B cell (primary cell): ENCODE measurements at regions of chr1 and their contacts with region 1.

Region 1: GRCh38 chr1:28208818-28209441 is 23.9 kb downstream of the DNAJC8 start:
- DNase-seq: peak; percentile 80
- ATAC-seq: peak; percentile 86
- H3K4me3 ChIP-seq: no peak overlapping the region
- H3K4me3 Mint-ChIP-seq: no peak overlapping the region
- H3K27ac ChIP-seq: no peak overlapping the region
- H3K27ac Mint-ChIP-seq: no peak overlapping the region
- H3K4me1 ChIP-seq: no peaks in the 10 kb centered on the region
- H3K4me1 Mint-ChIP-seq: peaks cover 2% of the 10 kb centered on the region
- H3K27me3 ChIP-seq: no peaks in the 10 kb centered on the region
- H3K27me3 Mint-ChIP-seq: no peaks in the 10 kb centered on the region
- CTCF ChIP-seq: peak; percentile 91

Region 2: DNA sequence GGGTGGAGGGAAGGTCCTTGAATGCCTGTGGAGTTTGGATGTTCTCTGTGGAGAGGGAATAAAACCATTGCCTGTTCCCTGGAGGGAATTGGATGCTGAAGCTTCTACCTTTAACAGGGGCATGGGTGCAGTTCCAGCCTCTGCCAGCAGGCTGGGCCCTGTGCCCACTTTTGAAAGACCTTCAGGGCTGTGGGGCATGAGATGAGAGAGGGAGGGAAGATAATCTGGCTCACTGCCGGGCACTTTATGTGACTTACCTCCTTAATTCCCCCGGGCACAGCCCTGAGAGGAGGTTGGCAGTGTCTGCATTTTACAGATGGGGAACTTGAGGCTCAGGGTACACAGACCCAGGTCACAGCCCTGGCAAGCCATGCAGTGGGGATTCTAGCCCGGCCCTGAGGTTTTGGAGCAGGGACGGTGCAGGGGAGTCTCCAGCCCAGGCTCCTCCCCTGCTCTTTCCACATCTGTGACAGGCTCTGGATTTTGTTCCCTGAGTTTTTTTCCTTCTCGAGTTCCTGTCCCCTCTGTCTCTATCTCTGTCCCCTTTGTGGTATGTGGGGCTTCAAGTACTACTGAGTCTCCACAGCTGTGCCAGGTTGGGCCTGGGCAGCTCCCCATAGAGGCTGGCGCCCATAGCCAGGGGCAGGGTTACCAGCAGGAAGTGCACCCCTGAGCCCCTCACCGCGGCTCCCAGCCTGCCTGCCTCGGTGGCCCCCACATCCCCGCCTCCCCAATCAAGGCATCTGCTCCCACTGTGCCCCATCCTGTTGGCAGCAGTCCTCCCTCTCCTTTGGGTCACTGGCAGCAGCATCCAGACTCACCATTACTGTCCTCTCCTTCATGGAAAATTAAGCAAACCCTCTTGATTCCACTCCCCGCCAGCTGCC is 350.6 kb before region 1 on chr1:
- CTCF ChIA-PET with region 1: interaction called, 9 read pairs
- POLR2A ChIA-PET with region 1: no interaction called
- intact Hi-C with region 1: loop called (anchors 1 kb)
- DNase-seq: peak; percentile 88
- ATAC-seq: peak; percentile 95
- H3K4me3 ChIP-seq: no peak overlapping the region
- H3K4me3 Mint-ChIP-seq: no peak overlapping the region
- H3K27ac ChIP-seq: no peak overlapping the region
- H3K27ac Mint-ChIP-seq: peak overlapping the region; percentile 79
- H3K4me1 ChIP-seq: peaks cover 20 to 22% of the 10 kb centered on the region in 2 donors
- H3K4me1 Mint-ChIP-seq: peaks cover 27% of the 10 kb centered on the region
- H3K27me3 ChIP-seq: peaks cover 0 to 3% (median 0%) of the 10 kb centered on the region in 4 experiments
- H3K27me3 Mint-ChIP-seq: no peaks in the 10 kb centered on the region
- CTCF ChIP-seq: peak; percentile 97

Region 3: GRCh38 chr1:27940297-27940696 is 268.6 kb before region 1 on chr1:
- CTCF ChIA-PET with region 1: interaction called, 16 read pairs
- POLR2A ChIA-PET with region 1: no interaction called
- intact Hi-C with region 1: no loop called
- DNase-seq: peak; percentile 71
- ATAC-seq: peak; percentile 78
- H3K4me3 ChIP-seq: no peak overlapping the region
- H3K4me3 Mint-ChIP-seq: no peak overlapping the region
- H3K27ac ChIP-seq: no peak overlapping the region
- H3K27ac Mint-ChIP-seq: no peak overlapping the region
- H3K4me1 ChIP-seq: peaks cover 4 to 8% of the 10 kb centered on the region in 2 donors
- H3K4me1 Mint-ChIP-seq: peaks cover 8% of the 10 kb centered on the region
- H3K27me3 ChIP-seq: peaks cover 0 to 12% (median 5%) of the 10 kb centered on the region in 4 experiments
- H3K27me3 Mint-ChIP-seq: peaks cover 8% of the 10 kb centered on the region
- CTCF ChIP-seq: peak; percentile 60

Region 4: GRCh38 chr1:28078680-28079626 is 130.0 kb before region 1 on chr1:
- CTCF ChIA-PET with region 1: interaction called, 22 read pairs
- POLR2A ChIA-PET with region 1: no interaction called
- intact Hi-C with region 1: no loop called
- DNase-seq: no peak
- ATAC-seq: no peak
- H3K4me3 ChIP-seq: no peak overlapping the region
- H3K4me3 Mint-ChIP-seq: no peak overlapping the region
- H3K27ac ChIP-seq: no peak overlapping the region
- H3K27ac Mint-ChIP-seq: peak overlapping the region; percentile 65
- H3K4me1 ChIP-seq: peaks cover 0 to 4% of the 10 kb centered on the region in 2 donors
- H3K4me1 Mint-ChIP-seq: peaks cover 28% of the 10 kb centered on the region
- H3K27me3 ChIP-seq: no peaks in the 10 kb centered on the region
- H3K27me3 Mint-ChIP-seq: no peaks in the 10 kb centered on the region
- CTCF ChIP-seq: no peak

Region 5: DNA sequence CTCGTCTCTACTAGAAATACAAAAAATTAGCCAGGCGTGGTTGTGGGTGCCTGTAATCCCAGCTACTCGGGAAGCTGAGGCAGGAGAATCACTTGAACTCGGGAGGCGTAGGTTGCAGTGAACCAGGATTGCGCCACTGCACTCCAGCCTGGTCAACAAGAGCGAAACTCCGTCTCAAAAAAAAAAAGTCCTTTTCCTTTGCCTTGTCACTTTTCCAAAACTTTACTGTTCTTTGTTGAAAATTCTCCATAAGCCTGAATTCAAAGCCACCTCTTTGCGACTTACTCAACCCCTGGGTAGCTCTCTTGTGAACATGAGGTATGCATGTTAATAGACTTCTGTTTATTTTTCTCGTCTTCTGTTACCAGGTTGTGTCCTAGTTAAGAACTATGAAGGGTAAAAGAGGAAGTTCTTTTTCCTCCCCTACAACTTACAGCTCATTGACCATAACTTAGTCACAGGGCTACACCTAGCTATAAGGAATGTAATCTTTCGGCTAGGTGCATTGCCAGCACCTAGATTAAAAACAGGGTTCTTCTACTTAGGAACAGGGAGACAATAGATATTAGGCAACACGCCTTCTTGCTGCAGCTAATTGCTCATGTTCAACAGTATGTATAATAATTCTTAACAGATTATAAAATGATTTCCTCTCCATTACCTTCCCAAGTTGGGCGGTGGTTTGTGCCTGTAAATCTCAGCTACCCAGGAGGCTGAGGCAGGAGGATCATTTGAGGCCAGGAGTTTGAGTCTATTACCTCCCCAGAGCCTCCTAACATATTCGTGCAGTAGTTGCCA is 73.4 kb before region 1 on chr1:
- CTCF ChIA-PET with region 1: interaction called, 11 read pairs
- POLR2A ChIA-PET with region 1: no interaction called
- intact Hi-C with region 1: no loop called
- DNase-seq: peak; percentile 74
- ATAC-seq: peak; percentile 90
- H3K4me3 ChIP-seq: peak overlapping the region in 1 of 5 experiments; percentile 21
- H3K4me3 Mint-ChIP-seq: peak overlapping the region; percentile 54
- H3K27ac ChIP-seq: peak overlapping the region; percentile 1 to 42
- H3K27ac Mint-ChIP-seq: peak overlapping the region; percentile 13
- H3K4me1 ChIP-seq: peaks cover 35 to 61% of the 10 kb centered on the region in 2 donors
- H3K4me1 Mint-ChIP-seq: peaks cover 62% of the 10 kb centered on the region
- H3K27me3 ChIP-seq: no peaks in the 10 kb centered on the region
- H3K27me3 Mint-ChIP-seq: no peaks in the 10 kb centered on the region
- CTCF ChIP-seq: no peak

Region 6: DNA sequence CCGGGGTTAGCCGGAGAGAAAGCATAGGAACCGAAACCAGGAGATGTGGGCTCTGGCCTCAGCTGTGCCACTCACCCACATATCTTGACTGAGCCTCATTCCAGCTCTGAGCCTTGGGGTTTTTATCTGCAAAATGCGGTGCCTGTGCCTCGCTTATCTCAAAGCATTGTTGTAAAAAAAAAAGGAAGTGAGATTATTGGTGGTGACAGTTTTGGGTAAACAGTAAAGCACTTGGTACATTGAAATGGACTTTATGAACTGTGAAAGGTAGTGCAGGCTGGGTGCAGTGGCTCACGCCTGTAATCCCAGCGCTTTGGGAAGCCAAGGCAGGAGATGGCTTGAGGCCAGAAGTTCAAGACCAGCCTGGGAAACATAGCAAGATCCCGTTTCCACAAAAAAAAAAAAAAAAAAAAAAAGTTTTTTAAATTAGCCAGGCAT is 36.2 kb before region 1 on chr1:
- CTCF ChIA-PET with region 1: interaction called, 30 read pairs
- POLR2A ChIA-PET with region 1: no interaction called
- intact Hi-C with region 1: loop called (anchors 2 kb)
- DNase-seq: peak; percentile 92
- ATAC-seq: peak; percentile 74
- H3K4me3 ChIP-seq: peak overlapping the region in 2 of 5 experiments; percentile 25 to 38
- H3K4me3 Mint-ChIP-seq: peak overlapping the region; percentile 60
- H3K27ac ChIP-seq: peak overlapping the region; percentile 59 to 66
- H3K27ac Mint-ChIP-seq: peak overlapping the region; percentile 88
- H3K4me1 ChIP-seq: peaks cover 85 to 94% of the 10 kb centered on the region in 2 donors
- H3K4me1 Mint-ChIP-seq: peaks cover 80% of the 10 kb centered on the region
- H3K27me3 ChIP-seq: no peaks in the 10 kb centered on the region
- H3K27me3 Mint-ChIP-seq: no peaks in the 10 kb centered on the region
- CTCF ChIP-seq: no peak